BJ (cell line): ENCODE measurements at regions of chr1 and their contacts with region 1.

Region 1: DNA sequence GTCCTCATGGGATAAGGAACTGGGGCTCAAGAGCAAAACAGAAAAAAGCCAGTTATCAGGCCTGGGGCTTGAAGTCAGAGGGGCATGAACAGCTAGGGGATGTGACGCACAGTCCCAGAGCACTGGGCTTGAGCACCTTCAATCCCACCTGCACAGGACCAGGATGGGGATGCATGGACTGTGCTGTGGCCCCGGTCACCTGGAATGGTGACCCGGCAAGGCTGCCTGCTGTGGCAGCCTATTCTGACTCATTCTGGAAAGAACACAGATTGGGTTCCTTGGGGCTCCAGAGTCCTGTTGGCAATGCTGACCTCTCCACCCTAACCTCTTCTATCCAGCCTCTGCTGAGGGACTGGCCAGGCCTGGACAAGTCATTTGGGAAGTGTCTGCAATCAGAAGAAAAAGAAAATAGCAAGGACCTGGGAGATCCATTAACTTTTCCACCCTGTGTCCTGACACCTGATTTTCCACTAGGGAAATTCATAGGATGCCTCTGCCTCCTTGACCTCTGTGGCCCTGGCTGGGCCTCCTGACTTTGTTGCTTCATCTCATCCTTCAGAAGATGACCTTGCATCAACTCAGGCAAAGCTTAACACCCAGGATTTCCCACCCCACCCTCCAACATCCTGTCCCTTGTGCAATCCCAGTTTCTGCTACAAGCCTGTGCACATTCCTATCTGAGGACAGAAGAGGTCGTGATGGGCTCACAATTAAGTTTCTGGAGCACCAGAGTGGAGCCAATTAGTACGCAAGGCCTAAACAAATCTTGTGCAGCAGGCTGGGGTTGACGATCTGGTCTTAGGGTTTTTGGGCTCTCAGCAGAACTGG is 17.9 kb upstream of the FMOD start:
- DNase-seq: peak; percentile 61
- H3K4me3 ChIP-seq: no peak overlapping the region
- H3K27me3 ChIP-seq: peaks cover 7% of the 10 kb centered on the region
- CTCF ChIP-seq: peak; percentile 59

Region 2: GRCh38 chr1:202018468-202019255 is 1350.2 kb before region 1 on chr1:
- CTCF ChIA-PET with region 1: no interaction called
- POLR2A ChIA-PET with region 1: no interaction called
- DNase-seq: no peak
- H3K4me3 ChIP-seq: no peak overlapping the region
- H3K27me3 ChIP-seq: peaks cover 4% of the 10 kb centered on the region
- CTCF ChIP-seq: no peak

Region 3: DNA sequence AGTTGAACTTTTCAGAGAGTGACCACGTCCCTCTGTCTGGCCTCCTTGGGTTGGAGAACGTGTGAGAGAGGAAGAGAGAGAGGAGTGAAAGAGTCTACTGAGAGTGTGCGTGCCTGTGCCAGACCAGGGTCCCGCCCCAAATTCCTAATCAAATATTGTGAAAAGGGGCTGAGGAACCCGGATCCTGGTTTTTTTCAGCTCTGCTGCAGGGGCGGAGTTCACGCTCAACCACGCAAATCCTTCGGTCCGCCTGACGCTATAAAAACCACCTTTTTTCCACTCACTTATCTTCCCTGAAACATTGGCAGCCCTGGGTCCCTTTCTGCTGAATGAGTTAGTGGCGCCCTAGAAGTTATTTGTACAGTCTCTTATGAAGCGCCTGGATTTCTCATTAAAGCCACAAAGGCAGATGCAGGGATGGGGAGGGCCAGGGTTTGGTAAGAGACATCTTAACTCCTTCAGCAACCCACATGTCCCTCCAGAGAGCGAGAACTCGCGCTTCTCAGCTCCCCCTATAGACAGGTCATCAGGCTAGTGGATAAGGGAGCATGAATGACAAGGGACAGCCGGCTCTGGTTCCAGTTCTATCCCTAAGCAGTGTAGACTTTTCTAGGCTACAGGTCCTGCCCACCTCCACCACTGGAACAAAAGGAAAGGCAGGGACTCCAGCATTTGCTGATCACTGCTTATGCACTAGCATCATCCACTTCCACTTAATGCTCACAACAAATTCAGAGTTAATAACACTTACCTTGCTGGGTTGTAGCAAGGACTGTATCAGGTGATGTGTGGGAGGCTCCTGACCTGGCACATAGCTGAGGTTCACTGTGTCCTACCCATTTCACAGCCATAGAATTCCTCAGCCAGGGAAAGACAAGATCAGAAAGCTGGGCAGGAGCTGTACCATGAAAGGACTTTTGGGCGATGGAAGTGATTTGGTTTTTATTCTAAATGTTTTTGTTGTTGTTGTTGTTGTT is 17.5 kb before region 1 on chr1 and contains the start of gene FMOD:
- CTCF ChIA-PET with region 1: interaction called, 11 read pairs
- POLR2A ChIA-PET with region 1: no interaction called
- DNase-seq: no peak
- H3K4me3 ChIP-seq: peak within 1 kb of the TSS; percentile 8; the same call in 1 of the 2 replicates
- H3K27me3 ChIP-seq: peaks cover 7% of the 10 kb centered on the region
- CTCF ChIP-seq: no peak
- polyA plus RNA-seq, gene FMOD: 14.0 and 18.0 TPM in 2 replicates

Region 4: GRCh38 chr1:203388683-203389082 is 19.8 kb after region 1 on chr1:
- CTCF ChIA-PET with region 1: no interaction called
- POLR2A ChIA-PET with region 1: no interaction called
- DNase-seq: no peak
- H3K4me3 ChIP-seq: no peak overlapping the region
- H3K27me3 ChIP-seq: peaks cover 4% of the 10 kb centered on the region
- CTCF ChIP-seq: no peak

Region 5: GRCh38 chr1:203454986-203455471 is 86.2 kb after region 1 on chr1:
- CTCF ChIA-PET with region 1: no interaction called
- POLR2A ChIA-PET with region 1: no interaction called
- DNase-seq: no peak
- H3K4me3 ChIP-seq: no peak overlapping the region
- H3K27me3 ChIP-seq: no peaks in the 10 kb centered on the region
- CTCF ChIP-seq: no peak